Activated T-helper 2 cell treated with anti-CD3 and anti-CD28 coated beads, Interferon-gamma antibody, Interleukin-2, Interleukin-4, amounts not matched to agents 10 μg/mL and 5 μg/mL and 100 μg/mL, durations not matched to agents 14 hours and 24 hours and 36 hours (primary cell): ENCODE measurements at regions of chr5 and their contacts with region 1.

Region 1: DNA sequence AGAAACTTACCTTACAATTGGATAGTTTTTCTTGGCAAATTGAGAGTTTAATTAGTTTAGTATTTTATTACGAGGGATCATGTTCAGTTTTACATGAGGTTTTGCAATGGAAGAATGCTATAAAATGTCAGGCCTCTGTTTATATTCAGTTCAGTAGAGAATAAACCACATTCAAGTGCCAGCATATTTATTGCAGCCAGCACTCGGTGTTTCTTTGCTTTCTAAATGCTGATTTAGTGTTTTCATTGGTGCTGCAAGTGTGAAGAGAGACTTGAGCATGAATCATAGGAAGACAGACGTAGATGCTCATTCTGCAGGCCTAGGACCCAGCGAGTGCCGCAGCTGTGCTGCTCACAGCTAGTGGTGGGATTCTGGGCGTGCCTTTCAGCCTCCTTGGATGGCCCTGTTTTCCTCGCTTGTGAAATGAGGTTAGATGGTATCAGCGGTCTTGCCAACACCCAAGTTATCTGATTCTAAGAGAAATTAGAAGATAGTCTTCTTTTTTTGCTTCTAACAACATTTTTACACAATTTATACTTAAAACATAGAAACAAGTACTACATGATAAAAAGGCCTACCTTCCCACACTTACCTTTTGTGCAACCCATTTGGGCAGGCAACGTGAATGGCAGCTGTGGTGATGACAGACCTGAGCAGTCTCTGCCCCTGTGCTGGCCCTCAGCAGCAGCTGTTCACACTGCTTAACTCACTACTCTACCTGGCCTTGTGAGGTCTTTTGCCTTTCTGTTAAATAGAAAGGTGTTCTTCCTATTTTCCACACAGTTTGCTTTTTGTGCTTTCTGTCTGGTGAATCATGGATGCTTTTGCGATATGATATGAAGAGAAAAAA is 26.8 kb upstream of the TNFAIP8 start:
- DNase-seq: peak; percentile 50
- H3K4me3 Mint-ChIP-seq: peak overlapping the region; percentile 52
- H3K27ac Mint-ChIP-seq: peak overlapping the region; percentile 86
- H3K4me1 Mint-ChIP-seq: peaks cover 83% of the 10 kb centered on the region
- H3K27me3 Mint-ChIP-seq: no peaks in the 10 kb centered on the region

Region 2: GRCh38 chr5:119031905-119032304 is 297.1 kb before region 1 on chr5:
- intact Hi-C with region 1: loop called (anchors 5 kb)
- DNase-seq: no peak
- H3K4me3 Mint-ChIP-seq: peak overlapping the region; percentile 3
- H3K27ac Mint-ChIP-seq: peak overlapping the region; percentile 58
- H3K4me1 Mint-ChIP-seq: peaks cover 25% of the 10 kb centered on the region
- H3K27me3 Mint-ChIP-seq: no peaks in the 10 kb centered on the region

Region 3: DNA sequence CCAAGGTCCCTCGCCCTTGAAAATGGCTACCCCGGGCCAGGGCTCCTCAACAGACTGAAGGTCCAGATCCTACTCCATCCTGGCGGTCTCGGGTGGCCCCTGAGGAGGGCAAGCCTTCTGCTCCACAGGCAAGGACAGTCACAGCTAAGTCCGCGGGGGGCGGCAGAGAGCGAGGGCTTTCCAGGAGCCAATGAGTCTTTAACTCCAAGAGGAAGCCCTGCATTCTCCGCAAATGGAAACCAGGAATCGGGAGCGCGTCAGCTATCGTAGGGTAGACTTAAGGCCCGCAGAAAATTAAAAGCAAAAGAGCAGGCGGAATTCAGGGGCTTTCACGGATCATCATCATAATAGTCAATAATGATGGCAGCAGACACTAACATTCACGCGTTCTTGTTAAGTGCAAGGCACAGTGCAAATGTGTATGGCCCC is 61.0 kb before region 1 on chr5:
- intact Hi-C with region 1: loop called (anchors 1 kb)
- DNase-seq: peak; percentile 70
- H3K4me3 Mint-ChIP-seq: peak overlapping the region; percentile 99
- H3K27ac Mint-ChIP-seq: peak overlapping the region; percentile 95
- H3K4me1 Mint-ChIP-seq: peaks cover 51% of the 10 kb centered on the region
- H3K27me3 Mint-ChIP-seq: no peaks in the 10 kb centered on the region

Region 4: GRCh38 chr5:119309326-119309725 is 19.7 kb before region 1 on chr5:
- intact Hi-C with region 1: loop called (anchors 1 kb)
- DNase-seq: no peak
- H3K4me3 Mint-ChIP-seq: peak overlapping the region; percentile 67
- H3K27ac Mint-ChIP-seq: peak overlapping the region; percentile 96
- H3K4me1 Mint-ChIP-seq: peaks cover 88% of the 10 kb centered on the region
- H3K27me3 Mint-ChIP-seq: no peaks in the 10 kb centered on the region

Region 5: DNA sequence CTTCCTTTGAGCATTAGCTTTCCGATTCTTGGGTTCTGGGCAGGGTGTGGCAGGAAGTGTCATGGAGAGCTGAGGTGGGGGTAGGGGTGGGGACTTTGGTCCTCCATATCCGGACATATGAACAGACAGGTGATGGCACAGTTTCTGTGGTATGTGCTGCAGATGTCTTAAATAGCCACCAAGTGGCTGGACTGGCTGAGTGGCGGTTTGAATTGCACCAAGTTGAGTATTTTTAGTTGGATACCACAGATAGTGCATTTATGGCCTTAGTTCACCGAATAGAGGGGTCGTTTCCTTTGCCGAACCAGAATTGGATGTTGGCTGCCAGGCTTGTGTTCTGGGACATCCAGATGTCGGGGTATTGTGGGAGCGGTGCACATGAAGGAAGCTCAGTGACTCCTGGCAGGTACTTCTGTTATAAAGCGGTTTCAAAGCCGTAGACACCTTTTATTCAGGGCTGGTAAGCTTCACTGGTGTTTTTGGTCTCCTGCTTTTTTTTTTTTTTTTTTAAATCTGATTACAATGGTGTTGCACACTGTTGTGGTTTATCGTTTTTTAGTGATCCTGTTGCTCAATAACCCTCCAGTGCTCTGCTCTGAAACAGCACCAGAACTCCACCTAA is 11.7 kb after region 1 on chr5:
- intact Hi-C with region 1: loop called (anchors 1 kb)
- DNase-seq: peak; percentile 65
- H3K4me3 Mint-ChIP-seq: peak overlapping the region; percentile 78
- H3K27ac Mint-ChIP-seq: peak overlapping the region; percentile 98
- H3K4me1 Mint-ChIP-seq: peaks cover 89% of the 10 kb centered on the region
- H3K27me3 Mint-ChIP-seq: no peaks in the 10 kb centered on the region

Region 6: GRCh38 chr5:119367502-119368237 is 38.7 kb after region 1 on chr5:
- intact Hi-C with region 1: loop called (anchors 1 kb)
- DNase-seq: no peak
- H3K4me3 Mint-ChIP-seq: peak overlapping the region; percentile 73
- H3K27ac Mint-ChIP-seq: peak overlapping the region; percentile 92
- H3K4me1 Mint-ChIP-seq: peaks cover 74% of the 10 kb centered on the region
- H3K27me3 Mint-ChIP-seq: no peaks in the 10 kb centered on the region

Region 7: GRCh38 chr5:119404033-119404432 is 75.1 kb after region 1 on chr5:
- intact Hi-C with region 1: no loop called
- DNase-seq: no peak
- H3K4me3 Mint-ChIP-seq: no peak overlapping the region
- H3K27ac Mint-ChIP-seq: no peak overlapping the region
- H3K4me1 Mint-ChIP-seq: peaks cover 21% of the 10 kb centered on the region
- H3K27me3 Mint-ChIP-seq: no peaks in the 10 kb centered on the region